WTC11 (cell line): ENCODE measurements at regions of chr6 and their contacts with region 1.

Region 1: DNA sequence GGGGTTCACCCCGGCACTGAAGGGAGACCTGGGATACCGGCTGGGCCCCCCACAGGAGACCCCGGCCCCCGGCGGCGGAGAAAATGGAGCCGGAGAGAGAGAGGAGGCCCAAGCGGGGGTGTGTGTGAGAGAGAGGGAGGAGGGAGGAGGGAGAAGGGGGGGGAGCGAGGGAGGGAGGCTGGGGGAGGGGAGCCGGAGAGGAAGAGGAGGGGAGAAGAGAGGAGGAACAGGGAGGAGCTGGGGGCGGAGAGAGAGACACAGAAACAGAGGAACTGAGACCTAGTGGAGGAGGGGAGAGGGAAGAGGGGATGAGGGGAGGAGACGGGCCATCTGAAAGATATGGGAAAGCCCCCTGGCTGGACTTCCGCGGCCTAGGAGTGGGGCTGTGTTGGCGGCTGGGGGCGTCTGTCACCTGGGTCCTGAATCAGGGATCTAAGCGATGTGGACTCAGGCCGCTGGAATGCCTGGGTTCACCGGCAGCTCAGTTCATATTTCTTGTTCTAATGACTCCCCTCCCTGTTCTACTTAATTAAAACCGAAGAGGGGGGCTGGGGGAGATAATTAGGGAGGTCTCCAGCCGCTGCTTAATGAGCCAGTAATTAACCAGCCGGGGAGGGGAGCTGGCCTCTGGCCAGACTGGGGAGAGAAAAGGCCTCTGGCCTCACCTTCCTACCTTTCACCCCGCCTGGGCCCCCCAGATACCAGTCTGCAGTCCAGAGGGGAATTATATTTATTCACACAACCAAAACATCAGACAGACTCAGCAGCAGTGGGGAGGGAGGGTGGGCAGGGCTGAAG is at the start of gene PBX2:
- DNase-seq: peak; percentile 68
- ATAC-seq: peak; percentile 64
- H3K4me3 Mint-ChIP-seq: peak within 1 kb of the TSS; percentile 85
- H3K27ac Mint-ChIP-seq: peak within 1 kb of the TSS; percentile 88
- H3K4me1 Mint-ChIP-seq: peaks cover 64% of the 10 kb centered on the region
- H3K27me3 Mint-ChIP-seq: no peaks in the 10 kb centered on the region
- CTCF ChIP-seq: no peak
- total RNA-seq, gene PBX2: 130 to 165 TPM (median 150 TPM) in 3 replicates

Region 2: DNA sequence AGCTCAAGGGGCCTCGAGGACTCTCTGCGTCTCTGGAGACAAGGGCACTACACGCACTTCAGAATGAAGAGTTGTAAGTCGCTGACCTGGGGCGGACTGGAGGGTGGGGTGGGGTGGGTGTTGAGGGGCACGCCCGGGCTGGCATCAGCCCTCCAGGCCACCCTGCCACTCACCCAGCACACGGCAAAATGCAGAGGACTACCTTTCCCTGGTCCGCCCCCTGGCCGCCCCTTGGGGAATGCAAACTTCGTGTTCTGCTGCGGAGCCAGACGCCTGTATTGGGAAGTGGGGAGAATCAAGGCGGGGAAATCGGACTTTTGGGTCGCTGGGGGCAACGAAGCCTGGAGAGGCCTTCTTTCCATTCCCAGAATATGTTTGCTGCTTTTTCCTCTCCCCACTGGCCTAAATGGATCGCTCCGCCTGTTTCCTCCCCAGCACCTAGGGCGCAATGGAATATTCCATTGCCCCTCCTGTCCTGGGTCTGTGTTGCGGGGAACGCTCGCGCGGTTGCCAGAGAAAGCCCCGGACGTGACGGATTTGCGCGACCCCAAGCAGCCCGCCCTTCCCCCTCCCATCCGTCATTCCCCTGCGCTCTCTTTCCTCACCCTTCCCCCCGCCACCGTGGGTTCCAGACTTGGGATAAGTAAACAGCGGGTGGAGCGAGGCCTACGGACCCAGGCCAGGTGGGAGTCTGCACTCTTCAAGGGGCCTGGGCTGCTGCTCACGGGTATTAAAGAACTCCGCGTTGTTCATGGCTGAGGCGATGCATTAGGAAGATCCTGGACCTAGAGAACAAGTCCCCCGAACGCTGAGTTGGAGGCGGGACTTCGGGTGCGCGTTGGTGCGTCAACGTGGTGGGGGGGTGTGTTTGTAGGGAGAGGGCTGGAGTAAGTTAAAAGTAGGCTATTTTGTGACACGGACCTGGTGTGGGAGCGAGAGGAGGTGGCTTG is 36.4 kb before region 1 on chr6 and contains the start of gene PPT2:
- CTCF ChIA-PET with region 1: interaction called, 17 read pairs
- POLR2A ChIA-PET with region 1: interaction called, 6 read pairs
- DNase-seq: peak; percentile 89
- ATAC-seq: peak; percentile 54
- H3K4me3 Mint-ChIP-seq: peak within 1 kb of the TSS; percentile 100
- H3K27ac Mint-ChIP-seq: peak within 1 kb of the TSS; percentile 99
- H3K4me1 Mint-ChIP-seq: peaks cover 35% of the 10 kb centered on the region
- H3K27me3 Mint-ChIP-seq: peaks cover 39% of the 10 kb centered on the region
- CTCF ChIP-seq: no peak
- total RNA-seq, gene PPT2: 30.0 to 33.8 TPM (median 31.6 TPM) in 3 replicates